ENCODE measurements at regions of chr16 and their contacts with region 1.

Region 1: GRCh38 chr16:85898521-85899442 is at the start of gene IRF8:
- DNase-seq: peak; percentile 80 to 86
- ATAC-seq: peak; percentile 71 to 85 (median 81)
- H3K4me3 ChIP-seq: peak within 1 kb of the TSS; percentile 54
- H3K4me3 Mint-ChIP-seq: peak within 1 kb of the TSS; percentile 96
- H3K27ac ChIP-seq: peak within 1 kb of the TSS; percentile 72
- H3K27ac Mint-ChIP-seq: peak within 1 kb of the TSS; percentile 89 to 97
- H3K4me1 ChIP-seq: peaks cover 48% of the 10 kb centered on the region
- H3K4me1 Mint-ChIP-seq: peaks cover 58 to 59% of the 10 kb centered on the region in 2 donors
- H3K27me3 ChIP-seq: no peaks in the 10 kb centered on the region
- H3K27me3 Mint-ChIP-seq: no peaks in the 10 kb centered on the region
- CTCF ChIP-seq: no peak
- total RNA-seq, gene IRF8: 101 to 167 (median 122) TPM

Region 2: DNA sequence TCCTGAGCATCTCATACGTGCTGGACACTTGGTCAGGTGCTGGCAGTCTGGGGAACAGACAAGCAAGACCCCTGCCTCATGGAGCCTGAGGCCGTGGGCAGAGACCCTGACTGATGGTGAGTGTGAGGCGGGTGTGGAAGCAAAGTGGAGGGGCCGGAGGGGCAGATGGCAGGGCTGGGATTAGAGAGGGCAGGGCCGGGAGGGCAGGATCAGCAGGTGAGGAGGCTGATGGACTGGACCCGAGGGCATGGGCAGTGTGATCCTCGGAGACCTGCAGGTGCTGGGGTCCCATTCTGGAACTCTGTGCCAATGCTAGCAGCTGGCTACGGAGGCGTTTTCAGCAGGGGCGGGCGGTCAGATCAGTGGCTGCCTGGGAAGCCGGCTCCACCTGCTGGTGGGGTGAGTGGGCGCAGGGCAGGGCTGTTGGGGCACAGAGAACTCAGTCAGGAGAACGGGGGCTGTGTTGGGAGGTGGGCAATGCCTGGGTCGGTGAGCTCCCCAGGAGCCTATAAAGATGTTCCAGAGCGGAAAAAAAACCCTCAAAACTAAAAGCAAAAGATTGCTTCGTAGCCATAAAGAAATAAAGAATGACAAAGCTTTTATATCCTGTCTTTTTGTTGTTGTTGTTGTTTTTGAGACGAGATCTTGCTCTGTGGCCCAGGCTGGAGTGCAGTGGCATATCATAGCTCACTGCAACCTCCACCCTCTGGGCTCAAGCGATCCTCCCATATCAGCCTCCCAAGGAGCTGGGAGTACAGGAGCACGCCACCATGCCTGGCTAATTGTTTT is 139.0 kb before region 1 on chr16:
- intact Hi-C with region 1: no loop called
- DNase-seq: peak in 1 of 2 donors; percentile 48
- ATAC-seq: peak; percentile 29 to 65 (median 63)
- H3K4me3 ChIP-seq: no peak overlapping the region
- H3K4me3 Mint-ChIP-seq: no peak overlapping the region
- H3K27ac ChIP-seq: peak overlapping the region; percentile 39
- H3K27ac Mint-ChIP-seq: no peak overlapping the region
- H3K4me1 ChIP-seq: peaks cover 42% of the 10 kb centered on the region
- H3K4me1 Mint-ChIP-seq: peaks cover 8 to 11% of the 10 kb centered on the region in 2 donors
- H3K27me3 ChIP-seq: no peaks in the 10 kb centered on the region
- H3K27me3 Mint-ChIP-seq: peaks cover 18 to 20% of the 10 kb centered on the region in 2 donors
- CTCF ChIP-seq: no peak

Region 3: GRCh38 chr16:85821441-85822135 is 77.2 kb before region 1 on chr16:
- intact Hi-C with region 1: loop called (anchors 5 kb)
- DNase-seq: peak; percentile 85
- ATAC-seq: peak; percentile 91 to 96 (median 93)
- H3K4me3 ChIP-seq: no peak overlapping the region
- H3K4me3 Mint-ChIP-seq: no peak overlapping the region
- H3K27ac ChIP-seq: no peak overlapping the region
- H3K27ac Mint-ChIP-seq: no peak overlapping the region
- H3K4me1 ChIP-seq: peaks cover 23% of the 10 kb centered on the region
- H3K4me1 Mint-ChIP-seq: peaks cover 0 to 15% of the 10 kb centered on the region in 2 donors
- H3K27me3 ChIP-seq: no peaks in the 10 kb centered on the region
- H3K27me3 Mint-ChIP-seq: peaks cover 0 to 7% of the 10 kb centered on the region in 2 donors
- CTCF ChIP-seq: peak; percentile 99

Region 4: GRCh38 chr16:85888405-85889331 is 10.1 kb before region 1 on chr16:
- intact Hi-C with region 1: loop called (anchors 1 kb)
- DNase-seq: peak in 1 of 2 donors; percentile 52
- ATAC-seq: peak; percentile 89 to 95 (median 93)
- H3K4me3 ChIP-seq: no peak overlapping the region
- H3K4me3 Mint-ChIP-seq: peak overlapping the region; percentile 70
- H3K27ac ChIP-seq: peak overlapping the region; percentile 69
- H3K27ac Mint-ChIP-seq: peak overlapping the region; percentile 84 to 88
- H3K4me1 ChIP-seq: peaks cover 17% of the 10 kb centered on the region
- H3K4me1 Mint-ChIP-seq: peaks cover 22 to 30% of the 10 kb centered on the region in 2 donors
- H3K27me3 ChIP-seq: no peaks in the 10 kb centered on the region
- H3K27me3 Mint-ChIP-seq: peaks cover 13 to 16% of the 10 kb centered on the region in 2 donors
- CTCF ChIP-seq: no peak

Region 5: DNA sequence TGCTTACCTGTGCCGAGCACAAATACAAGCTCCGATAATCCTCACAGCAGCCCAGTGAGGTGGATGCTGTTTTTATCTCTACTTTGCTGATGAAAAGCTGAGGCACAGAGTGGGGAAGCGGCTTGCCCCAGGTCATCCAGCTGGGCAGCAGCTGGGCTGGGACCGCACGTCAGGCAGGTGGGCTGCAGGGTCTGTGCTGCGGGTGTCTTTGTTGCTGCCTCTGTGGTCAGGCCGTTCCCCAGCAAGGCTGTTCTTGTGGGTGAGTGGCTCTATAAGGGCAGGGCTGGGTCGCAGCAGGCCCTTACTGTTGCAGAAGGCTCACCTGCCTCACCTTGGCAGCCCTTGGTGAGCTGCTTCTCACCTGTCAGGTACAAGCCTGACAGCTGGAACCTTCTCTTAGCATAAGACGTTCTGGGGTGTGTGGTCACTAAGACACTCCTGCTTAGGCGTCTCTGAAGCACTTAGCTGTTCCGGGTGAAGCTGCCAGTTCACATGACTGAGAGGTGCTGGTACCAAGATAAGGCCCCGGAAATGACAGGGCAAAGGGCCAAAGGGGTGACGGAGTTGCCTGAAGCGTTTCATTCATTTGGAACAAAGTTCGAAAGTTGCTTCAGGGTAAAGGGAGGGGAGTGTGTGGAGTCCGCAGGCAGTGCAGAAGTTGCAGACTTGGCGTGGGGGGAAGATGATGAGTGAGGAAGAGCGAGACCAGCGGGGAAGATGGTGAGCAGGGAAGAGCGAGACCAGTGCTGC is 17.5 kb after region 1 on chr16:
- intact Hi-C with region 1: loop called (anchors 1 kb)
- DNase-seq: peak; percentile 34 to 48
- ATAC-seq: peak; percentile 76 to 84 (median 82)
- H3K4me3 ChIP-seq: no peak overlapping the region
- H3K4me3 Mint-ChIP-seq: peak overlapping the region; percentile 83
- H3K27ac ChIP-seq: peak overlapping the region; percentile 45
- H3K27ac Mint-ChIP-seq: peak overlapping the region; percentile 80 to 89
- H3K4me1 ChIP-seq: peaks cover 74% of the 10 kb centered on the region
- H3K4me1 Mint-ChIP-seq: peaks cover 66 to 78% of the 10 kb centered on the region in 2 donors
- H3K27me3 ChIP-seq: no peaks in the 10 kb centered on the region
- H3K27me3 Mint-ChIP-seq: no peaks in the 10 kb centered on the region
- CTCF ChIP-seq: no peak

Region 6: DNA sequence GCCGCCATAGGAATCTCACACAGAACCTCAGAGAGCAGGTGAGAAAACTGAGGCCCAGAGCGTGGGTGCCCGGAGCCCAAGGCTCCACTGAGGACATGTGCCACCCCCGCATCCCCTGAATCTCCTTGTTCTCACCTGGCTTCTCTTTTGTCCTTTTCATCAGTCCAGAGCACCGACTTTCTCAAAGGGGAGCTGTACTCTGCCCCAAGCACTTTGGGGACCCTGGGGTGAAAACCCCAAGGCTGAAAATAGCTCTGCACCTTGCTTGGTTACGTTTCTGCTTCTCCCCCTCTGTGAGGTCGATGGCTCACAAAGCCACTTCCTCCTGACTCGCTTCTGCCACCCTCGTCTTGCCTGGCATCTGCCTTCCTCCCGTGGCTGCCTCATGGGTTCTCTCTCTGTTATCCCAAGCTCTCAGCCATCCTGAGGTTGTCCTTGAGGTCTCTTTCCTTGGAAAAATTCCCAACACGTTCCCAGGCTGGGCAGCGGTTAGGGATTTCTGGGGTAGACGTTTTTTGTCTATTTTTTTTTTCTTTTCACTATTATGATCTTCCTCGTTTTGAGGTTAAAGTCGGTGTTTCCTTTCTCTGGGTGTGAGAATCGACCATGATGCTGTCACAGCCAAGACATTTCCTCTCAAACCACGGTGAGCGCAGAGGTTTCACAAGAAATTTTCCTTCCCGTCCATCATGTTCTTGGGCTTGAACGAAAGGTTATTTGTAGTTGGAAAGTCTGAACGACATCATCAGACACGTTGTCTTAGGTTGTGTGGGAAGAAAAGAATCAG is 37.4 kb after region 1 on chr16:
- intact Hi-C with region 1: loop called (anchors 1 kb)
- DNase-seq: peak; percentile 79 to 88
- ATAC-seq: peak; percentile 78 to 86 (median 85)
- H3K4me3 ChIP-seq: peak overlapping the region; percentile 41
- H3K4me3 Mint-ChIP-seq: peak overlapping the region; percentile 77
- H3K27ac ChIP-seq: peak overlapping the region; percentile 97
- H3K27ac Mint-ChIP-seq: peak overlapping the region; percentile 92 to 94
- H3K4me1 ChIP-seq: peaks cover 83% of the 10 kb centered on the region
- H3K4me1 Mint-ChIP-seq: peaks cover 63 to 74% of the 10 kb centered on the region in 2 donors
- H3K27me3 ChIP-seq: no peaks in the 10 kb centered on the region
- H3K27me3 Mint-ChIP-seq: no peaks in the 10 kb centered on the region
- CTCF ChIP-seq: no peak

Region 7: DNA sequence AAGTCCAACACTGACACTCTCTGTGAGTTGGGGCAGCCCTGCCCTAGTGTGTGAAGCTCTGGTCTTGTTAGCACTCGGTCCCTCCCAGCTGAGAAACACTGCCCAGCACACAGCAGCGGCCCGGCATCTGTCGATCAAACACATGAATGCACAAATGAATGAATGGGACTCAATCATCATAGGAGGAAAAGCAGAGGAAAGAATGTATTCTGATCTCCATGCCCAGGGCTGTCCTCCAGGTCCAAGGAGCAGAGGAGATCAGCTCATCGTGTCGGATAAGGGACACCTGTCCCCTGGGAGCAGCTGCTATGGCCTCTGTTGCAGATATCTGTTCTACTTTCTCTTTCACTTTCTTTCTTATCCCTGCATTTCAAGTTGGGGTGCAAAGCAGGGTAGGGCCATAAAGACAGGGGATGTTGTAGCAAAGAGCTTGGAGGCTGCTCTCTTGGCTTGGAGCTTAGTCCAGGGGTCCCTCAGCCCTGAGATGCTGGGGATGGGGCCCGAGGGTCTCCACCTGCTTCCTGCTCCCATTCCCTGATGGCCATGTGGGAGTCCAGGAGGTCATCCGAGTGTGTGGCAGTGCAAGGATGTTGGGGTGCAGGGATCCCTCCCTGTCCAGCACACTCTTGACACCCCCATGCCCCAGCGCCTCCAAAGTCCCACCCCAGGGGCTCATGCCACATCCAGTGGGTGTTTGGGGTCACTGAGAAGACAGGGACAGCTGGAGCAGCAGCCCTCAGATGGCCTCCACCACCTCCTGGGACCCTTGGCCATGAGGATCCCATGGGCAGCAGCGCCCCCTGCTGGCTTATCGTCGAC is 88.4 kb after region 1 on chr16:
- intact Hi-C with region 1: loop called (anchors 5 kb)
- DNase-seq: peak; percentile 47 to 64
- ATAC-seq: peak in 2 of 3 donors; percentile 34 to 46
- H3K4me3 ChIP-seq: no peak overlapping the region
- H3K4me3 Mint-ChIP-seq: peak overlapping the region; percentile 61
- H3K27ac ChIP-seq: peak overlapping the region; percentile 10
- H3K27ac Mint-ChIP-seq: peak overlapping the region; percentile 91 to 95
- H3K4me1 ChIP-seq: peaks cover 72% of the 10 kb centered on the region
- H3K4me1 Mint-ChIP-seq: peaks cover 31 to 54% of the 10 kb centered on the region in 2 donors
- H3K27me3 ChIP-seq: no peaks in the 10 kb centered on the region
- H3K27me3 Mint-ChIP-seq: no peaks in the 10 kb centered on the region
- CTCF ChIP-seq: peak; percentile 57